Activated B cell treated with CpG ODN at 0.5 μM for 24 hours (primary cell): ENCODE measurements at regions of chr10 and their contacts with region 1.

Region 1: DNA sequence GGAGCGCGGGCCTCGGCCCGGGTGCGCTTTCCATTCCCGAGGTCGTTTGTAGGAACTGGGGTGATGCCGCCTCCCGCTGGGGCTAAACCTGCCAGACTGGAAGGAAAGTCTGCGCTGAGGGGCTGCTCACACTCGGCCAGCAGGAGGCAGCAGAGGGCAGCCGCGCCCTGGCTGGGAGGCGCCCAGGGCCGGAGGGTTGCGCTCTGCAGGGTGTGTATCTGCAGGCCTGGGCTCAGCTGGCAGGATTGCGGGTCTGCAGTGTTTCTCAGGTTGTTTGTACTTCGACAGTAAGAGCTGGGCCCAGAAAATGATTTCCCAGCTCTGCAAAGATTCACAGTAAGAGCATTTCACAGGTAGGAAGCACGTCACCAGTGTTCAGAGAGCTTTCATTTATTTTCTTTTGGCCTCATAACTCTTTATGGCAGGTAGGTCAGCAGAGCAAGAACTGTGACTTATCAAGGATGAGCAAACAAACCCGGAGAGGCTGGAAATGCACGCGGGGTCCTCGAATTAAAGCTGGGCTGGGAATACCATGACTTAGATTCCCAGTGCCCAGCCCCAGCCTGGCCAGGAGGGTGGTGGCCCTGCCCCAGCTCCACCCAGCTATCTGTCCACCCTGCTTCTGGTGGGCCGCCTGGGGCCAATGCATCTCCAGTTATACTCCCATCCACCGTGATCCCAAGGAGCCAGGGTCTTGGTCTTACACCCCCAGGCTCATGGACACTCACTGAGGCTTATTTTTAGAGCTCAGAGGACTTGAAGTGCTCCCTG is 15.2 kb upstream of the PPP2R2D start:
- DNase-seq: peak; percentile 79
- ATAC-seq: peak; percentile 99
- H3K4me3 Mint-ChIP-seq: no peak overlapping the region
- H3K27ac Mint-ChIP-seq: no peak overlapping the region
- H3K4me1 Mint-ChIP-seq: peaks cover 3% of the 10 kb centered on the region
- H3K27me3 Mint-ChIP-seq: peaks cover 11% of the 10 kb centered on the region
- CTCF ChIP-seq: peak; percentile 87

Region 2: DNA sequence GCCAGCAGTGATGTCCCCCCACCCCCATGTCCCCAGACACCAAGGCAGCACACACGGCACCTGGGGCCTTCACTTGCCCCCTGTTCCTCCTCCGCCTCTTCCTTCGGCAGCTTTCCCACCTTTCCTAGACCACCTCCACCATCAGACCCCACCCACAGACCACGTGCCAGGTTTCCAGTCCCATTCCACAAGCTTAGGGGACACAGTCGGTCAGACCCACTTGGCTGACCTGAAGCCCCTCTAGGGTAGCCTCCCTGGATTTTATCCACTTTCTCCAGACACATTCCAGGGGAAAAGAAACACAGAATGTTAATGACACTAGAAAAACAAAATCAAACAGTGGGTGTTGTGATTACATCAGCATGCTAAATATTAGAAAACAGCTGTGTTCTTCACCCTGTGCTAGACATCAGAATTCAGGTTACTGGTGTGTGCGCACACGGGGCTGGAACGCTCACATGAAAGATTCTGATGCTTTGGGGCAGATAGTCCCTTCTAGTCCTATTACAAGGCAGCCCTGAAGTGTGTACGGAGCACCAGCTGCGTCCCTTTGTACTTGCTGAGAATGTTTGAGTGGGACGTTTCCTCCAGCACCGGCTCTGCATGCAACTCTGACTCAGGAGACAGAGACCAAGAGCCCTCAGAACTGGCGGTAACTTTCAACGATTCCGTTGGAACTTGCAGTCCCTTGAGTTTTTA is 60.3 kb before region 1 on chr10:
- CTCF ChIA-PET with region 1: no interaction called
- POLR2A ChIA-PET with region 1: no interaction called
- intact Hi-C with region 1: no loop called
- DNase-seq: no peak
- ATAC-seq: no peak
- H3K4me3 Mint-ChIP-seq: no peak overlapping the region
- H3K27ac Mint-ChIP-seq: no peak overlapping the region
- H3K4me1 Mint-ChIP-seq: no peaks in the 10 kb centered on the region
- H3K27me3 Mint-ChIP-seq: no peaks in the 10 kb centered on the region
- CTCF ChIP-seq: no peak

Region 3: DNA sequence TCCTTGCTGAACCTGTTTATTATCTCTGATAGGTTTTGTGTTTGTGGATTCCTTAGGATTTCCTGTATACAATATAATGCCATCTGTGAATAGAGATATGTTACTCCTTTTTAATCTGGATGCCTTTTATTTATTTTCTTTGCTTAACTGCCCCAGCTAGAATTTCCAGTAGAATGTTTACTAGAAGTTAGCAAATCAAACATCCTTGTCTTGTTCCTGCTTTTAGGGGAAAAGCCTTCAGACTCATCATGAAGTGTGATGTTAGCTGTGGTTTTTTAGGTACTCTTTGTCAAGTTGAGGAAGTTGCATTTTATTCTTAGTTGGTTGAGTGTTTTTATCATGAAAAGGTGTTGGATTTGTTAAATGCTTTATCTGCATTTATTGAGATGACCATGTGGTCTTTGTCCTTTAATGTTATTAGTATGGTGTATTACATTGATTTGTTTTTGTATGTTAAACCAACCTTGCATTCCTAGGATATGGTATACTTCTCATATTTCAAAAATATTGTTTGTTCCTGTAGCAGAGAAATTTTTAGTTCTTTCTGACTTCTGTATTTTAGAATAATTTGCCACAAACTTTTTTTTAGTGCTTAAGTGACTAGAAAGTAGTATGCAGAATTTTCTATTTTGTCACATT is 39.6 kb after region 1 on chr10:
- CTCF ChIA-PET with region 1: interaction called, 3 read pairs
- POLR2A ChIA-PET with region 1: no interaction called
- intact Hi-C with region 1: loop called (anchors 1 kb)
- DNase-seq: no peak
- ATAC-seq: no peak
- H3K4me3 Mint-ChIP-seq: no peak overlapping the region
- H3K27ac Mint-ChIP-seq: peak overlapping the region; percentile 50
- H3K4me1 Mint-ChIP-seq: peaks cover 76% of the 10 kb centered on the region
- H3K27me3 Mint-ChIP-seq: no peaks in the 10 kb centered on the region
- CTCF ChIP-seq: no peak

Region 4: DNA sequence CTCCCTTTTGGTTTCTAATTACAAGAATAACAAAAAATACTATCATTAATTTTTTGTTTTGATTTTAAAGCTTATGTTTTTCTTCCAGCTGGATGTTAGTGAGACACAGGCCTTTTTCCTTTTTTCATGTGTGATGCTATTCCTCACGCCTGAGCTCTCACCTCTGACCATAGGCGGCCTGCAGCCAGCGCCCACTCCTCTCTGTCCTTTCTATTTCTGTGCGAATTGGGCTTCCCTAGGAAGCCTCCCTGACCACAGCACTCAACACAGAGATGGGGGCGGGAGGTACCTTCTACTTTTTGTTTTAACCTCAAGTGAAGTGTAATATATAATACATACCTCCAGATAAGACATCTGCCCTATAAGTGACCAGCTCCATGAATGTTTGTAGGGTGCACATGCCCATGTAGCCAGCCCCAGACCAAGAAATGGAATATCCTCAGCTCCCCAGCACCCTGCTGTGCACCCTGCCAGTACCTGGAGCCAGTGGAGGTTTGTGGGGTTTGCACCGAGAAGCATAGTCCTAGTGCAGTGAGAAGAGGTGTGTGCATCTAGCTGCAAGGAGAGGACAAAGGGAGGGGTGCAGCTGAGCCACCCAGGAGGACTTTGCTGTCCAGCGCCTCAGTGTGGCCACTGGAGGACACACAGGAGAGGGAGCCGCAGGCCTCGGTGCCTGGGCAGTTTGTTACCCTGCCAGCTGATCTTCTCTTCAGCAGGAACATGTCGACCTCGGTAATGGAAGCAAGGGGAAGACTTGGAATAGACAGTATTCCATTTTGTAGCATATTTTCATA is 57.6 kb after region 1 on chr10:
- CTCF ChIA-PET with region 1: interaction called, 3 read pairs
- POLR2A ChIA-PET with region 1: no interaction called
- intact Hi-C with region 1: loop called (anchors 1 kb)
- DNase-seq: no peak
- ATAC-seq: no peak
- H3K4me3 Mint-ChIP-seq: no peak overlapping the region
- H3K27ac Mint-ChIP-seq: no peak overlapping the region
- H3K4me1 Mint-ChIP-seq: no peaks in the 10 kb centered on the region
- H3K27me3 Mint-ChIP-seq: no peaks in the 10 kb centered on the region
- CTCF ChIP-seq: no peak

Region 5: DNA sequence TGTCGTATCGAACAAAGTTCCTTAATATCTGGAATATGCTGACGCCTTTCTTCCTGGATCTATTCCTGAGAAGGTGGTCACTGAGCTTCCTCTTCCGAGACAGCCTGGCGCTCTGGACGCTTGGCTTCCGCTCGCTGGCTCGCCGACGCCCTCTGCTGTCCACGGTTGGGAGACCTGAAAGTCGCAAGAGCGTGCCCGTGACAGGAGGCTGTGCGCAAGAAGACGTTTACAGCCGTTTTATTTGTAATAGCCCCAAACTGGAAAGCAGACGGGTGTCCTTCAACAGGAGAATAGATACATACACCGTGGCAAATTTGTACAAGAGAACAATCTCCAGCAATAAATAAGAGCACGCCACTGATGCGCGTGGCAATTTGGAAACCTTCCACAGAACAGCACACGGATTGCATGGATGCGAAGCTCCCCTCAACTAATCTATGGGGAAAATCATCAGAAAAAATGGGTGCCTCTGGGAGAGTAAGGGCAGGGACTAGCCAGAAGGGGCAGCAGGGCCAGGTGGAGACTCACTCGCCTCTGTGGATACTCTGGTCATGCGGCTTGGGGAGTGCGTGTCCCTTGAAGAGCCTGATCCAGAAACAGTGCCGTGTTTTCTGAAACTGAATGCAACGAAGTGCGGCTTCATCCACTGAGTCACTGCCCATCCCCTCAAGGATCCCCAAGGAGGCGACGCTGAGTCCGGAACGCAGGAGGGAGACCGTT is 137.7 kb after region 1 on chr10:
- CTCF ChIA-PET with region 1: interaction called, 51 read pairs
- POLR2A ChIA-PET with region 1: interaction called, 5 read pairs
- intact Hi-C with region 1: no loop called
- DNase-seq: peak; percentile 57
- ATAC-seq: peak; percentile 72
- H3K4me3 Mint-ChIP-seq: no peak overlapping the region
- H3K27ac Mint-ChIP-seq: no peak overlapping the region
- H3K4me1 Mint-ChIP-seq: peaks cover 4% of the 10 kb centered on the region
- H3K27me3 Mint-ChIP-seq: peaks cover 18% of the 10 kb centered on the region
- CTCF ChIP-seq: peak; percentile 48

Region 6: GRCh38 chr10:132353456-132354355 is 468.1 kb after region 1 on chr10:
- CTCF ChIA-PET with region 1: no interaction called
- POLR2A ChIA-PET with region 1: no interaction called
- intact Hi-C with region 1: loop called (anchors 1 kb)
- DNase-seq: no peak
- ATAC-seq: no peak
- H3K4me3 Mint-ChIP-seq: no peak overlapping the region
- H3K27ac Mint-ChIP-seq: no peak overlapping the region
- H3K4me1 Mint-ChIP-seq: peaks cover 7% of the 10 kb centered on the region
- H3K27me3 Mint-ChIP-seq: no peaks in the 10 kb centered on the region
- CTCF ChIP-seq: no peak